Caco-2 (cell line): ENCODE measurements at regions of chr11 and their contacts with region 1.

Region 1: GRCh38 chr11:86550757-86551156 is 121.7 kb downstream of the ME3 start:
- DNase-seq: no peak
- H3K4me3 ChIP-seq: no peak overlapping the region
- H3K4me3 Mint-ChIP-seq: no peak overlapping the region
- H3K27ac Mint-ChIP-seq: no peak overlapping the region
- H3K4me1 ChIP-seq: peaks cover 9% of the 10 kb centered on the region
- H3K4me1 Mint-ChIP-seq: peaks cover 18% of the 10 kb centered on the region
- H3K27me3 ChIP-seq: no peaks in the 10 kb centered on the region
- H3K27me3 Mint-ChIP-seq: no peaks in the 10 kb centered on the region
- CTCF ChIP-seq: no peak

Region 2: DNA sequence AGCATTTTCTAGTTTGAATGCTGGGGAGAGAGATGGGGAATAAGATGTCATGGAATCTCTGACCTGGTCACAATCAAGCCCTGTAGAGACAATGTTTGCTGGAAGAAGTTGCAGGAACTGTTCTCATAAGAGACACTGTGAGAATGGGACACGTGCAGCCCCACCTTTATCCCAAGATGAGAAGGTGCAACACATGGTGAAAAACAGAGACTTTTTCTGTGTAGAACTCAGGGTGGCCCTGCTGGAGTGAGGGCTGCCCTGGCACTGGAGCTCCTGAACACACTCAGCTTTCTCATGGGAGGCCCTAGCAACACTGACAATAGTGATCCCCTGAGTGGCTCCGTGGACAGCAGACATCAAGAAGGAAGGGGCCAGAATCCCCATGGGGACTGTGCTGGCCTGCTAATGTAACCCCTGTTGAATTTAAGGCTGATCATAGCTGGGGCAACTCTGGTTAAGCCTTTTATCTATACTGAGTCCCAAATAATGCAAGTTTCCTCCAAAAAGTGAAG is 15.1 kb after region 1 on chr11:
- CTCF ChIA-PET with region 1: interaction called, 5 read pairs
- POLR2A ChIA-PET with region 1: no interaction called
- intact Hi-C with region 1: loop called (anchors 1 kb)
- DNase-seq: no peak
- H3K4me3 ChIP-seq: no peak overlapping the region
- H3K4me3 Mint-ChIP-seq: no peak overlapping the region
- H3K27ac Mint-ChIP-seq: no peak overlapping the region
- H3K4me1 ChIP-seq: peaks cover 19% of the 10 kb centered on the region
- H3K4me1 Mint-ChIP-seq: peaks cover 23% of the 10 kb centered on the region
- H3K27me3 ChIP-seq: no peaks in the 10 kb centered on the region
- H3K27me3 Mint-ChIP-seq: no peaks in the 10 kb centered on the region
- CTCF ChIP-seq: no peak